ENCODE measurements at regions of chr22 and their contacts with region 1.

Region 1: DNA sequence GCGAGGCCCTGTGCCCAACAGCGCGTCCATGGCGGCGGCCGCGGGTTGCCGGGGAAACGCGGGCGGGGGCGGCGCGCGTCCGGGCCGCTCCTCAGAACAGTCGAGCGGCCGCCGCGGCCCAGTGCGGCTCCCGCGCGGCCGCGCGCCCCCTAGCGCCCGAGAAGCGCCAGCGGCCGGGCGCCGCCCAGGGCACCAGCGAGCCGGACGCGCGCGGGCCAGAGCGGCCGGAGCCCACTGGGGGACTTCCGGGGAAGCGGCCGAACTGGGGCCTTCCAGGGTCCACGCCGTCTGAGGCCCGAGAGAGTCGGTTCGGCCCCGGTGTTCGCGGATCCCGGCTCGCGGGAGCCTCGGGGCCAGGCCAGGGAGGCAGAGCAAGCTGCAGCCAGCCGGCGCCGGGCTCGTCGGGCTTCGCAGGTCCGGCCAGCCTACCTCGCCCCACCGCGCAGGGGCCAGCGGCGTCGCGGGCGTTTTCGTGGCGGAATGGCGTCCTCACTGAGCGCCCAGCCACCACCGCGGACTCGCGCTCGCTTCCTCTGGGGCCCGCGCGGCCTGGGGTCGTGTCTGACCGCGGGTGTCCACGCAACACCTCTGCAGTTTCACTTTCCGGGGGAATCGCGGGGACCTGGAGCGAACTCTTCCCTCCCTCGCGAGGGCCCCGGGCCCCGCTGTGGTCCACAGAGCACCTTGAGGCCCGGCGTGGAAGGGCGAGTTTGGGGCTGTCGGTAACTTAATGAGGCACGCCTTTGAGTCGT is at the start of gene DENND6B:
- DNase-seq: peak in 8 of 9 donors; percentile 26 to 86 (median 58)
- ATAC-seq: peak; percentile 98
- H3K4me3 ChIP-seq: peak within 1 kb of the TSS; percentile 60
- H3K4me3 Mint-ChIP-seq: peak within 1 kb of the TSS; percentile 76 to 88 (median 81)
- H3K27ac ChIP-seq: peak within 1 kb of the TSS; percentile 64
- H3K27ac Mint-ChIP-seq: peak within 1 kb of the TSS; percentile 22 to 88 (median 55)
- H3K4me1 ChIP-seq: peaks cover 0 to 4% of the 10 kb centered on the region in 2 donors
- H3K4me1 Mint-ChIP-seq: peaks cover 5 to 15% (median 9%) of the 10 kb centered on the region in 7 donors
- H3K27me3 ChIP-seq: no peaks in the 10 kb centered on the region
- H3K27me3 Mint-ChIP-seq: peaks cover 0 to 33% (median 0%) of the 10 kb centered on the region in 5 donors
- total RNA-seq, gene DENND6B: 2.1 to 4.0 (median 2.8) TPM

Region 2: DNA sequence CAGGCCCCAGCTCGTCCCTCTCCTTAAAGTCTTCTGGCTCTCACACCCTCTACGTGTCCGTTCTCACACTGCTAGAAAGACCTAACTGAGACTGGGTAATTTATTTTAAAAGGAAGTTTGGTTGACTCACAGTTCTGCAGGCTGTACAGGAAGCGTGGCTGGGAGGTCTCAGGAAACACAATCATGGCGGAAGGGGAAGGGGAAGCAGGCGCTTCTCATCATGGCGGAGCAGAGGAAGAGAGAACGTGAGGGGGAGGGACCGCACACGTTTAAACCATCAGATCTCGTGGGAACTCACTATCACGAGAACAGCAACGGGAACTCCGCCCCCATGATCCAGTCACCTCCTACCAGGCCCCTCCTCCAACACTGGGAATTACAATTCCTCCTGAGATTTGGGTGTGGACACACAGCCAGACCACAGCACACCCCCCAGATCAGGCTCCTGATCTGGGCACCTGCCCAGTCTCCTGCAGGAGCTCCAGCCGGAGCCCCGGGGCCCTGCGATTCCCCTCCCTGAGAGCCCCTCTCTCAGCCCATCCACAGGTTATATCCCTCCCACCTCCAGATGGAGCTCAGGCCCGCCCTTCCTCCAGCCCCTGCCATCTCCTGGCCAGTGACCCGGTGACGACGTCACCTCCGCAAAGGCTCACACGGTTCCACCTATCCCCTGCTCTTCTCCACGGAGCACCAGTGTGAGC is 669.7 kb before region 1 on chr22:
- CTCF ChIA-PET with region 1: no interaction called
- POLR2A ChIA-PET with region 1: no interaction called
- intact Hi-C with region 1: loop called in 1 of 2 experiments (anchors 10 kb)
- DNase-seq: peak; percentile 37 to 83 (median 74)
- ATAC-seq: peak; percentile 92
- H3K4me3 ChIP-seq: peak overlapping the region; percentile 87
- H3K4me3 Mint-ChIP-seq: peak overlapping the region; percentile 92 to 99 (median 94)
- H3K27ac ChIP-seq: peak overlapping the region; percentile 65
- H3K27ac Mint-ChIP-seq: peak overlapping the region; percentile 76 to 95 (median 90)
- H3K4me1 ChIP-seq: peaks cover 17 to 25% of the 10 kb centered on the region in 2 donors
- H3K4me1 Mint-ChIP-seq: peaks cover 16 to 55% (median 36%) of the 10 kb centered on the region in 7 donors
- H3K27me3 ChIP-seq: no peaks in the 10 kb centered on the region
- H3K27me3 Mint-ChIP-seq: no peaks in the 10 kb centered on the region

Region 3: GRCh38 chr22:50148991-50149721 is 178.0 kb before region 1 on chr22:
- CTCF ChIA-PET with region 1: interaction called, 3 read pairs
- POLR2A ChIA-PET with region 1: no interaction called
- intact Hi-C with region 1: loop called in 1 of 2 experiments (anchors 1 kb)
- DNase-seq: peak; percentile 61 to 80 (median 70)
- ATAC-seq: peak; percentile 96
- H3K4me3 ChIP-seq: no peak overlapping the region
- H3K4me3 Mint-ChIP-seq: no peak overlapping the region
- H3K27ac ChIP-seq: no peak overlapping the region
- H3K27ac Mint-ChIP-seq: no peak overlapping the region
- H3K4me1 ChIP-seq: no peaks in the 10 kb centered on the region
- H3K4me1 Mint-ChIP-seq: peaks cover 0 to 4% (median 0%) of the 10 kb centered on the region in 7 donors
- H3K27me3 ChIP-seq: no peaks in the 10 kb centered on the region
- H3K27me3 Mint-ChIP-seq: peaks cover 0 to 6% (median 0%) of the 10 kb centered on the region in 5 donors

Region 4: DNA sequence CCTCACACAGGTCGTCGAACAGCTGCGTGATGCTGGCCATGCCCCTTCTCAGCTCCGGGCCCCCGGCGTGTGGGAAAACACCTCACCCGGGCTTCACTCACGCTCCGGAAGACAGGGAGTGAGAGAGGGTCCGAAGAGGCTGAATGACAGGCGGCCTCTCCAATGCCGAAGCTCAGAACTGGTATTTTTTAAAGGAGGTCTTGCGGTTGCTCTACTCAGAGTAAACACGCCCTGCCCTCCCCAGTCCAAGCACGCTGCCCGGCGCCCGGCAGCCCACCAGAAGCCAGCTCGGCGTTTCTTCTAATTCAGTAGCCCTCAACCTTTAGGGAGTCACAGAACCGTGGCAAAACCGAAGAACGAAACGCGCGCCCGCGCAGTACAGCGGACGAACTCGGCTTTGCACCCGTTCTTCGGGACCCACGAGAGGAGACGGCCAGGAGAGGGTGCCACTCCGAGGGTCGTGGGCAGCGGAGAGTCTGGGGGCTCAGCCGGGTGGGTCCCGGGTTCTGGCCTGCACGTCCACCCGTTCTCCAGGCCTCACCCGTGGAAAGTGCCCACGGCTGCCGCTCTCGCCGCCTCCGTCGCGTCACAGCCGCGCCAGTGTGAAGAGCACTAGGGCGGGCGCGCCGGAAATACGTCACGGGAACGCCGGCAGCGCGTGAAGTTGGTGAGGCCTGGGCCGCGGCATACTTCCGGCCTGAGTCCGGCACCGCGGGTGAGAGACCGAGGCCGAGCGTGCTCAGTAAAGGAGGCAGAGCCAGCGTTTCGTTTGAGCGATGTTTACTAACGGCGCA is 82.5 kb before region 1 on chr22 and contains the start of gene TUBGCP6:
- CTCF ChIA-PET with region 1: interaction called, 3 read pairs
- POLR2A ChIA-PET with region 1: interaction called, 3 read pairs
- intact Hi-C with region 1: loop called (anchors 1 to 2 kb)
- DNase-seq: peak; percentile 88 to 95 (median 93)
- ATAC-seq: peak; percentile 88
- H3K4me3 ChIP-seq: peak within 1 kb of the TSS; percentile 73
- H3K4me3 Mint-ChIP-seq: peak within 1 kb of the TSS; percentile 76 to 100 (median 98)
- H3K27ac ChIP-seq: peak within 1 kb of the TSS; percentile 96
- H3K27ac Mint-ChIP-seq: peak within 1 kb of the TSS; percentile 91 to 100 (median 100)
- H3K4me1 ChIP-seq: peaks cover 39 to 51% of the 10 kb centered on the region in 2 donors
- H3K4me1 Mint-ChIP-seq: peaks cover 16 to 52% (median 40%) of the 10 kb centered on the region in 7 donors
- H3K27me3 ChIP-seq: no peaks in the 10 kb centered on the region
- H3K27me3 Mint-ChIP-seq: no peaks in the 10 kb centered on the region
- total RNA-seq, gene TUBGCP6: 67.8 to 146 (median 134) TPM

Region 5: GRCh38 chr22:50250555-50251476 is 76.3 kb before region 1 on chr22 and contains the start of gene HDAC10:
- CTCF ChIA-PET with region 1: interaction called, 5 read pairs
- POLR2A ChIA-PET with region 1: interaction called, 3 read pairs
- intact Hi-C with region 1: loop called in 1 of 2 experiments (anchors 1 kb)
- DNase-seq: peak; percentile 60 to 86 (median 71)
- ATAC-seq: peak; percentile 78
- H3K4me3 ChIP-seq: peak within 1 kb of the TSS; percentile 71
- H3K4me3 Mint-ChIP-seq: peak within 1 kb of the TSS; percentile 61 to 88 (median 80)
- H3K27ac ChIP-seq: peak within 1 kb of the TSS; percentile 71
- H3K27ac Mint-ChIP-seq: peak within 1 kb of the TSS in 7 of 9 donors; percentile 31 to 80 (median 65)
- H3K4me1 ChIP-seq: peaks cover 25 to 38% of the 10 kb centered on the region in 2 donors
- H3K4me1 Mint-ChIP-seq: peaks cover 4 to 26% (median 17%) of the 10 kb centered on the region in 7 donors
- H3K27me3 ChIP-seq: no peaks in the 10 kb centered on the region
- H3K27me3 Mint-ChIP-seq: no peaks in the 10 kb centered on the region
- total RNA-seq, gene HDAC10: 95.9 to 139 (median 105) TPM

Region 6: GRCh38 chr22:50276143-50276542 is 51.0 kb before region 1 on chr22:
- CTCF ChIA-PET with region 1: no interaction called
- POLR2A ChIA-PET with region 1: no interaction called
- intact Hi-C with region 1: loop called (anchors 1 kb)
- DNase-seq: peak in 2 of 9 donors; percentile 22 to 27
- ATAC-seq: peak; percentile 86
- H3K4me3 ChIP-seq: no peak overlapping the region
- H3K4me3 Mint-ChIP-seq: no peak overlapping the region
- H3K27ac ChIP-seq: no peak overlapping the region
- H3K27ac Mint-ChIP-seq: no peak overlapping the region
- H3K4me1 ChIP-seq: peaks cover 3 to 4% of the 10 kb centered on the region in 2 donors
- H3K4me1 Mint-ChIP-seq: peaks cover 0 to 12% (median 5%) of the 10 kb centered on the region in 7 donors
- H3K27me3 ChIP-seq: no peaks in the 10 kb centered on the region
- H3K27me3 Mint-ChIP-seq: peaks cover 0 to 12% (median 0%) of the 10 kb centered on the region in 5 donors

Region 7: GRCh38 chr22:50314455-50315288 is 12.5 kb before region 1 on chr22:
- CTCF ChIA-PET with region 1: interaction called, 4 read pairs
- POLR2A ChIA-PET with region 1: interaction called, 3 read pairs
- intact Hi-C with region 1: loop called in 1 of 2 experiments (anchors 1 kb)
- DNase-seq: peak; percentile 44 to 71 (median 60)
- ATAC-seq: peak; percentile 94
- H3K4me3 ChIP-seq: peak overlapping the region; percentile 53
- H3K4me3 Mint-ChIP-seq: peak overlapping the region; percentile 76 to 92 (median 87)
- H3K27ac ChIP-seq: peak overlapping the region; percentile 64
- H3K27ac Mint-ChIP-seq: peak overlapping the region; percentile 79 to 97 (median 88)
- H3K4me1 ChIP-seq: peaks cover 14 to 17% of the 10 kb centered on the region in 2 donors
- H3K4me1 Mint-ChIP-seq: peaks cover 9 to 18% (median 12%) of the 10 kb centered on the region in 7 donors
- H3K27me3 ChIP-seq: no peaks in the 10 kb centered on the region
- H3K27me3 Mint-ChIP-seq: no peaks in the 10 kb centered on the region

Region 8: GRCh38 chr22:50444663-50445062 is 117.5 kb after region 1 on chr22:
- CTCF ChIA-PET with region 1: no interaction called
- POLR2A ChIA-PET with region 1: no interaction called
- intact Hi-C with region 1: no loop called
- DNase-seq: no peak
- ATAC-seq: no peak
- H3K4me3 ChIP-seq: no peak overlapping the region
- H3K4me3 Mint-ChIP-seq: peak overlapping the region in 1 of 10 donors; percentile 69
- H3K27ac ChIP-seq: peak overlapping the region; percentile 55
- H3K27ac Mint-ChIP-seq: peak overlapping the region in 8 of 9 donors; percentile 32 to 84 (median 68)
- H3K4me1 ChIP-seq: peaks cover 9 to 20% of the 10 kb centered on the region in 2 donors
- H3K4me1 Mint-ChIP-seq: peaks cover 0 to 25% (median 19%) of the 10 kb centered on the region in 7 donors
- H3K27me3 ChIP-seq: no peaks in the 10 kb centered on the region
- H3K27me3 Mint-ChIP-seq: no peaks in the 10 kb centered on the region